ENCODE measurements at regions of chr21 and their contacts with region 1.

Region 1: GRCh38 chr21:31558962-31559367 is 100.5 kb upstream of the SOD1 start:
- DNase-seq: peak; percentile 97
- H3K4me3 ChIP-seq: peak overlapping the region; percentile 83
- H3K27ac ChIP-seq: peak overlapping the region; percentile 71
- H3K4me1 ChIP-seq: peaks cover 20% of the 10 kb centered on the region
- CTCF ChIP-seq: peak; percentile 50

Region 2: GRCh38 chr21:31397515-31397926 is 161.4 kb before region 1 on chr21:
- CTCF ChIA-PET with region 1: no interaction called
- POLR2A ChIA-PET with region 1: interaction called, 9 read pairs
- intact Hi-C with region 1: loop called (anchors 2 kb)
- DNase-seq: peak; percentile 21
- H3K4me3 ChIP-seq: peak overlapping the region; percentile 26
- H3K27ac ChIP-seq: peak overlapping the region; percentile 76
- H3K4me1 ChIP-seq: peaks cover 40% of the 10 kb centered on the region
- CTCF ChIP-seq: no peak

Region 3: DNA sequence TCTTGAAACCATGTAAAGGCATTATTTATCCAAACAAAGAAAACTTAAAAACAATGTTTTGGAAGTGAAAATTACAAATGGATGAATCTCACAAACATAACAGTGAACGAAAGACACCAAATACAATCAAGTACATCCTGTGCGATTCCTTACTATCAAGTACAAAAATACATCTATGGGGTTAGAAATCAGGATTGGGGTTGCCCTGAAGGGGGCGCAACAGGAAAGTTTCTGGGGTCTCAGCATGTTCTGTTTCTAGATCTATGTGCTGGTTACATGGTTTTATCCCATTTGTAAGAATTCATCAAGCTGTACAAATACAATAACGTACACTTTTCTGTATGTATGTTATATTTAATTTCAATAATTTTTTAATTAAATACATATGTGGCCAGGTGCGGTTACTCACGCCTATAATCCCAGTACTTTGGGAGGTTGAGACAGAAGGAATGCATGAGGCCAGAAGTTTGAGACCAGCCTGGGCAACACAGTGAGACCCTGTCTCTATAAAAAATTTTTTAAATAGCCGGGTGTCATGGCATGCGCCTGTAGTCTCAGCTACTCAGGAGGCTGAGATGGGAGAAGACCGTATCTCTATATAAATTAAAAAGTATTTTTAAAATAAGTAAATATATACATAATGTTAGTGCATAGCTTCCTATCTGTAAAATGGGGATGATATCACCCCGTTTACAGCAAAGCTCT is 20.9 kb before region 1 on chr21:
- CTCF ChIA-PET with region 1: interaction called, 3 read pairs
- POLR2A ChIA-PET with region 1: interaction called, 11 read pairs
- intact Hi-C with region 1: no loop called
- DNase-seq: no peak
- H3K4me3 ChIP-seq: no peak overlapping the region
- H3K27ac ChIP-seq: no peak overlapping the region
- H3K4me1 ChIP-seq: no peaks in the 10 kb centered on the region
- CTCF ChIP-seq: peak; percentile 65

Region 4: DNA sequence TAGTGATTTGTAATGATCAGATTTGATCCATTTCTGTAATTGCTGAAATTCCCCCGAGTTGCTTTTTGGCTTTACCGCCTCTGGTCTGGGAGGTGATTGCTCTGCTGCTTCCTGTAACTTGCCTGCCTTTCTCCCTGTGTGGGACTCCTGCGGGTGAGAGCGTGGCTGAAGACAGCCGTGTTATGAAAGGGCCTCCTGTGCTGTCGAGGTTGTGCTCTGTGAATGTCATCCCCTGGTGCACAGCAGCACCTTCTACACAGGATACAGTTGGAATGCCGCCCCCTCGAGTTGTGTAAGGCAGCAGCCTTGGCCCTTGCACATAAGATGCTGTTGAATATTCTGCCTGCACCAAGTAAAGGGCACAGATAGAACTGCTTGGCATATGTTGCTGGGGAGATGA is 106.4 kb after region 1 on chr21:
- CTCF ChIA-PET with region 1: no interaction called
- POLR2A ChIA-PET with region 1: interaction called, 3 read pairs
- intact Hi-C with region 1: loop called (anchors 5 kb)
- DNase-seq: no peak
- H3K4me3 ChIP-seq: no peak overlapping the region
- H3K27ac ChIP-seq: no peak overlapping the region
- H3K4me1 ChIP-seq: peaks cover 55% of the 10 kb centered on the region
- CTCF ChIP-seq: no peak

Measured in OCI-LY7 (cell line).